ENCODE measurements at regions of chr17 and their contacts with region 1.

Region 1: DNA sequence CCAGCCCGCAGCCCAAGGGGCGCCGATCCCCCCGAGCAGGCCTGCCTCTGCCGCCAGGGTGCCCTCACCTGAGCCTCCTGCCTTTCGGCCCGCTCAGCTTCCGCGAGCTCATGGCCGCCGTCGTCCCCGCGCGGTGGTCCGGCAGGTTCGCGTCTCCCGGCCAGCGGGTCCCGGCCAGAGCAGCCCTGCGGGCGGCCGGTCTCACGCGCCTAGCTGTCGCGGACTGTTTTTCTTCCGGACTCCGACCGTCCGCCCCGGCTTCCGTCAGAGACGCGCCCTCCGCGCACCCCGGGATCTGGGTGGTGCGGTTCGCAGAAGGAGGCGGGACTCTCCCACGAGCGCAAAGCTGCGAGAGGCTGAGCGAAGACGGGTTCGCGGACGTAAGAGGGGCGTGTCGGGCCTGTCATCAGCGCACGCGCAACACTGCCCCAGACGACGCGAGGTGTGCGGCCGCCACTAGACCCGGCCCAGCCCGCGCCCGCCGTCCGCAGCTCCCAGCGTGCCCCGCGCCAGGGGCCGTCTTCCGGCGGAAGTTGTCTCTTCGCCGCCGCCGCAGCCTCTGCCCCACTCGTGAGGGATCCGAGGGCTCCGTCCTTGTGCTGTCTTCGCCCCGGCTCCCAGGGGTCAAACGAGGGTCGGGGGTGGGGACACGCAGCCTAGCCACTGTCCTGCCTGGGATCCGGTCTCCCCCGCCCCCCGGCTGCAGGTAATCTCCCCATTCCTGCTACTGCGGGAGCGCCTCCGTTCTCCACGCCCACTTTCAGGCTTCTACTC is at the start of gene INPP5K:
- DNase-seq: peak; percentile 99
- ATAC-seq: peak; percentile 99
- H3K4me3 Mint-ChIP-seq: peak within 1 kb of the TSS; percentile 85
- H3K27ac Mint-ChIP-seq: peak within 1 kb of the TSS; percentile 81
- H3K4me1 Mint-ChIP-seq: peaks cover 28% of the 10 kb centered on the region
- H3K27me3 Mint-ChIP-seq: no peaks in the 10 kb centered on the region
- total RNA-seq, gene INPP5K: 18.5 to 27.3 TPM

Region 2: DNA sequence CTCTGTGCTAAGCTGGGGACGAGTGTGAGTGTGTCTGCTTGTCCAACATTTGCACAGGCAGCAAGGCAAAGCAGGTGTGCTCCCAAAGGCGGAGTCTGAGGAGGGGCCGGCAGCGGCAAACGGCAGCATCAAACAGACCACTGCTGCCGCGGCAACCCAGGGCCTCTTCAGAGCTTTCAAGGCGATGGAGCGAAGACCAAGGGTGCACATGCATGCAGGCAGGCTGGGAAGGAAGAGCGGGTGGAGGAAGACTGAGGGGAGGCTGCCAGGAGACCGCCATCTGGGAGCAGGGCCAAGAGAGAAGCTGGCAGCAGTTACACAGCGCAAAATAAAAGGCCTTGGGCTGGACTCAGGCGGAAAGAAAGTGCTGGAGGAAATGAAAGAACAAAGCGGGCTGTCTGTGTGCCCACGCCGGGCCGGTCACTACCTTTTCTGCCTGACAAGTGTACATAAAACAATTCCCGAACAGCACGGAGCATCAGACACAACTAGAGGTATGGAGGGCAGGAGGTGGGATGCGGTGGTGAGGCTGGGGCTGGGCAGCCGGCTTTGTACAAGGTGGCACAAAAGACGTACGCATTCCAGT is 511.1 kb before region 1 on chr17:
- CTCF ChIA-PET with region 1: no interaction called
- POLR2A ChIA-PET with region 1: no interaction called
- intact Hi-C with region 1: no loop called
- DNase-seq: no peak
- ATAC-seq: no peak
- H3K4me3 Mint-ChIP-seq: no peak overlapping the region
- H3K27ac Mint-ChIP-seq: peak overlapping the region; percentile 19
- H3K4me1 Mint-ChIP-seq: peaks cover 8% of the 10 kb centered on the region
- H3K27me3 Mint-ChIP-seq: no peaks in the 10 kb centered on the region

Region 3: DNA sequence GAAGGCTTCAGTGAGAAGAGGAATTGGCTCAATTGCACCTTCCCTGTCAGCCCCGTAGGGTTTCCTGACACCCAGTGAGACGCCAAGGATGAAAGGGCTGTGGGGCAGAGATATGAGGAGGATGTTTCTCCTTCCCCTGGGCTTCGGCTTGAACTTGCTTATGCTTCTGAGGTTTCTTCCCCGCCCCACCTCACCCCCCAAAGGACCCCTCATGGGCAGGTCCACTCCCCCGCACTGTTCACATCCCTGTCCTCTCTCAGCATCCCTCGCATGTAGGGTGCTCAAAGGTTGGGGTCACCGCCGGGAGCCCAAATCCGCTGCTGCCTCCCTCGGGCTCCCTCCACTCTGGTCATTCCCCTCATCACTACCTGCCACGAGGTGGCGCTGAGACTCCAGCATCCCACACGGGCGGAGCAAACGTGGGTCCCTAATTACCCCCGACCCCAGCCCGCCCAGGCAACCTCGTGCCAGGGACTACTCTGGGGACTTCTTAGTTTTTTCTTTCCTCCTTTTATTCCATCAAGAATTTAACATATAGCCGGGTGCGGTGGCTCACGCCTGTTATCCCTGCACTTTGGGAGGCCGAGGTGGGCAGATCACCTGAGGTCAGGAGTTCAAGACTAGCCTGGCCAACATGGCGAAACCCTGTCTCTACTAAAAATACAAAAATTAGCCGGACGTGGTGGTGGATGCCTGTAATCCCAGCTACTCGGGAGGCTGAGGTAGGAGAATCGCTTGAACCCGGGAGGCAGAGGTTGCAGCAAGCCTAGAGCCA is 240.4 kb before region 1 on chr17:
- CTCF ChIA-PET with region 1: no interaction called
- POLR2A ChIA-PET with region 1: no interaction called
- intact Hi-C with region 1: loop called (anchors 1 kb)
- DNase-seq: peak; percentile 84
- ATAC-seq: peak; percentile 91
- H3K4me3 Mint-ChIP-seq: no peak overlapping the region
- H3K27ac Mint-ChIP-seq: no peak overlapping the region
- H3K4me1 Mint-ChIP-seq: peaks cover 4% of the 10 kb centered on the region
- H3K27me3 Mint-ChIP-seq: peaks cover 25% of the 10 kb centered on the region

Region 4: GRCh38 chr17:1390433-1391367 is 125.9 kb before region 1 on chr17:
- CTCF ChIA-PET with region 1: interaction called, 15 read pairs
- POLR2A ChIA-PET with region 1: no interaction called
- intact Hi-C with region 1: no loop called
- DNase-seq: no peak
- ATAC-seq: peak; percentile 40
- H3K4me3 Mint-ChIP-seq: peak overlapping the region; percentile 9
- H3K27ac Mint-ChIP-seq: peak overlapping the region; percentile 87
- H3K4me1 Mint-ChIP-seq: peaks cover 81% of the 10 kb centered on the region
- H3K27me3 Mint-ChIP-seq: no peaks in the 10 kb centered on the region

Region 5: GRCh38 chr17:1462287-1463112 is 54.1 kb before region 1 on chr17:
- CTCF ChIA-PET with region 1: no interaction called
- POLR2A ChIA-PET with region 1: no interaction called
- intact Hi-C with region 1: loop called in 1 of 2 experiments (anchors 1 kb)
- DNase-seq: peak; percentile 32
- ATAC-seq: no peak
- H3K4me3 Mint-ChIP-seq: peak overlapping the region; percentile 37
- H3K27ac Mint-ChIP-seq: no peak overlapping the region
- H3K4me1 Mint-ChIP-seq: peaks cover 38% of the 10 kb centered on the region
- H3K27me3 Mint-ChIP-seq: peaks cover 16% of the 10 kb centered on the region

Region 6: GRCh38 chr17:1484676-1485421 is 31.7 kb before region 1 on chr17:
- CTCF ChIA-PET with region 1: no interaction called
- POLR2A ChIA-PET with region 1: no interaction called
- intact Hi-C with region 1: no loop called
- DNase-seq: peak; percentile 56
- ATAC-seq: peak; percentile 8
- H3K4me3 Mint-ChIP-seq: peak overlapping the region; percentile 63
- H3K27ac Mint-ChIP-seq: peak overlapping the region; percentile 72
- H3K4me1 Mint-ChIP-seq: peaks cover 28% of the 10 kb centered on the region
- H3K27me3 Mint-ChIP-seq: no peaks in the 10 kb centered on the region

Region 7: DNA sequence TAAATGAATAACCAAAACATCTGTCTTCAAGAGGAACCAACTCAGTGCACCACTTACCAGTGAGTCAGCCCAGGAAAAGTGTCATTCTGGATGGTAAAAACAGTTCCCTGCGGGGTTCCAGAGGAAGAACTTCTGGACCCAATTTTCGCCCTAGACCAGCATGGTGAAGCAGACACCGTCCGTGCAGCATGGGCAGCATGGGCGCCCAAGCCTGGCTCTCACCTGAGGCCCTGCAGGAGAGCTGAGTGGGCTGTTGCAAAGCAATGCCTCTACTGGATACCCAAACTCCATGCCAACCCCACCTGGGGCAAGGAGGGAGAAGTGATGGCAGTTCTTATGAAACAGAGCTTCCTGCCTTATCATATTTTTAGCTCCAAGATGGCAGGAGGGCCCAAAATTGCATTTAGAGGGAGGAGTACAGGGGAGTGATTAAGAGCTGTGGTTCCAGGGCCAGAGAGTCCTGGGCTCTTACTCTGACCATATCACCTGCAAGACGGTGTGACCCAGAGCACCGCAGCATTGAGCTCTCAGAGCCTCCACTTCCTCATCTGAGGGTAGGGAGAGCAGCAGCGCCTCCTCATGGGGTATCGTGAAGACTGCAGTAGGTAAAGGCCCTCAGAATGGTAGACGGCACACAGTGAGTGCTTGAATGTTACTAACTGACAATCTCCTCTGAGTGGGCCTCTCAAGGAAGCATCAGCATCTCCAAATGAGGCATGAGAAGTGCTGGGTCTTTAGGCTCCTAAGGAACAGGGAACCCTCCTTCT is 16.4 kb after region 1 on chr17:
- CTCF ChIA-PET with region 1: interaction called, 26 read pairs
- POLR2A ChIA-PET with region 1: interaction called, 3 read pairs
- intact Hi-C with region 1: no loop called
- DNase-seq: peak; percentile 72
- ATAC-seq: peak; percentile 86
- H3K4me3 Mint-ChIP-seq: no peak overlapping the region
- H3K27ac Mint-ChIP-seq: no peak overlapping the region
- H3K4me1 Mint-ChIP-seq: peaks cover 5% of the 10 kb centered on the region
- H3K27me3 Mint-ChIP-seq: no peaks in the 10 kb centered on the region

Region 8: DNA sequence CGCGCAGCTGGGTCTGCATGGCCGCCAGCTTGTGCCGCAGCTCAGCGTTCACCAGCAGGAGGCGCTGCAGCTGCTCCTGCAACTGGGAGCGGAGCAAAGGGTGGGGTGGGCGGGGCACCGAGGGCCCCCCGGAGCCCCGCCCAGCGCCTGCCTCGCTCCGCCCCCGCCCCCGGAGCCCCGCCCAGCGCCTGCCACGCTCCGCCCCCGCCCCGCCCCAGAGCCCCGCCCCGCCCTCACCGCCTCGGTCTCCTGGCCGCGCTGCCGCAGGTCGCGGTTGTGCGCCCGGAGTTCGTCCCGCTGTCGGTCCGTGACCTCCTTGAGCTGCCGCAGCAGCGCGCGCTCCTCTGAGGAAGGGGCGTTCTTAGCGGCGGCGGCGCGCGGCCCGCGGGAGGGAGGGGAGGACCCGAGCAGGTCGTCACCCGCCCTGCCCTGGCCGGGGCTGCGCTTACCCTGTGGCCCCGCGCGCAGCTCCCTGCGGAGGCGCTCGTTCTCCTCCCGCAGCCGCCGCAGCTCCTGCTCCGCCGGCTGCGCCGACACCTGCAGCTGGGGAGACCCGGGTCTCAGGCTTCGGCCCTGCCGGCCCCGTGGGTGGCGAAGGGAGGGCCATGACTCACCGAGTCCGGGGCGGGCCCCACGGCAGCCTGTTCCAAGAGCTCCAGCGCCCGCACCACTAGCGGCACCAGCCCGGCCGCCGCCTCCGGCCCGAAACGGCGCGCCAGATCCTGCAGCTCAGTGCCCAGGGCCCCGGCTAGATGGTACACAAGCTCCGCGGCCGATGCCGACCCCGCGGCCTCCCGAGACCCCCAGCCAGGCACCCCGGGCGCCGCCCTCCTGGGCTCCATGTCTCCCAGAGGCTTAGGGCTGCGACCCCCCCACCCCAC is 132.6 kb after region 1 on chr17:
- CTCF ChIA-PET with region 1: no interaction called
- POLR2A ChIA-PET with region 1: no interaction called
- intact Hi-C with region 1: loop called in 1 of 2 experiments (anchors 1 kb)
- DNase-seq: peak; percentile 97
- ATAC-seq: peak; percentile 74
- H3K4me3 Mint-ChIP-seq: peak overlapping the region; percentile 43
- H3K27ac Mint-ChIP-seq: no peak overlapping the region
- H3K4me1 Mint-ChIP-seq: peaks cover 25% of the 10 kb centered on the region
- H3K27me3 Mint-ChIP-seq: no peaks in the 10 kb centered on the region

Region 9: DNA sequence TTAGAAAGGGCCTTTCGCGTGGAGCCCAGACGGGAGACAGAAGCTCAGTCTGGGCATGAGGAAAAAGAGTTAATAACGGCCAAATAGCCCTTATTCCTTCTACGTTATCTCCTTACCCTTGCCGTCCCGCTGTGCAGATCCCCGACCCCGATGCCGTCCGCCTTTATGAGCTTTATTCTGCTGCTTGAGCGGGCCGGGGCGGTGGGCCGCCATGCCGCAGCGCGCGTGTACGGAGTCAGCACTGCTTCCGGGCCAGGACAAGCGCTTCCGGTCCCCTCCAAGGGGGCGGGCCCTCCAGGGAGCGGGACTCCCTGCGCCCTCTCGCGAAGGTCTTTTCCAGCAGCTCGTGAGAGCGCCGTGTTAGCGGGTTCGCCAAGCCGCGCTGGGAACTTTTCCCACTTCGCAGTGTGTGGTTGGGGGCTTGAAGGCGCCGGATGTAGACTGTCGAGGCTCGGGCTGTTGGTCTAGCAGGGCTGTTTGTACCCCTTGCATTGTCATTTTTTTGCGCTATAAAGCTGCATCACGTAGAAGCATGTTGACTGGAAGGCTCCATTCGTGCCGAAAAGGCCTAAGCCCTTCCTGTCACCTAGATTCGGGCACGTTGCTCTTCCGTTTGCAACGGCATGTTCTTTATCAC is 819.8 kb after region 1 on chr17 and contains the start of gene TSR1:
- CTCF ChIA-PET with region 1: no interaction called
- POLR2A ChIA-PET with region 1: no interaction called
- intact Hi-C with region 1: loop called in 1 of 2 experiments (anchors 2 kb)
- DNase-seq: peak; percentile 94
- ATAC-seq: peak; percentile 93
- H3K4me3 Mint-ChIP-seq: no peak within 1 kb of the TSS
- H3K27ac Mint-ChIP-seq: peak within 1 kb of the TSS; percentile 99
- H3K4me1 Mint-ChIP-seq: peaks cover 14% of the 10 kb centered on the region
- H3K27me3 Mint-ChIP-seq: no peaks in the 10 kb centered on the region
- total RNA-seq, gene TSR1: 59.3 to 77.0 TPM